Heart right ventricle (tissue), 16 donors: ENCODE measurements at regions of chr12 and their contacts with region 1.

Region 1: GRCh38 chr12:8956772-8957171 is 7.3 kb upstream of the M6PR start:
- DNase-seq: peak in 1 of 2 donors; percentile 14
- ATAC-seq: peak in 3 of 8 donors; percentile 34 to 72 (median 53)
- H3K4me3 ChIP-seq: no peak overlapping the region
- H3K27ac ChIP-seq: no peak overlapping the region
- H3K4me1 ChIP-seq: peaks cover 0 to 10% (median 0%) of the 10 kb centered on the region in 9 donors
- H3K27me3 ChIP-seq: no peaks in the 10 kb centered on the region
- CTCF ChIP-seq: no peak

Region 2: DNA sequence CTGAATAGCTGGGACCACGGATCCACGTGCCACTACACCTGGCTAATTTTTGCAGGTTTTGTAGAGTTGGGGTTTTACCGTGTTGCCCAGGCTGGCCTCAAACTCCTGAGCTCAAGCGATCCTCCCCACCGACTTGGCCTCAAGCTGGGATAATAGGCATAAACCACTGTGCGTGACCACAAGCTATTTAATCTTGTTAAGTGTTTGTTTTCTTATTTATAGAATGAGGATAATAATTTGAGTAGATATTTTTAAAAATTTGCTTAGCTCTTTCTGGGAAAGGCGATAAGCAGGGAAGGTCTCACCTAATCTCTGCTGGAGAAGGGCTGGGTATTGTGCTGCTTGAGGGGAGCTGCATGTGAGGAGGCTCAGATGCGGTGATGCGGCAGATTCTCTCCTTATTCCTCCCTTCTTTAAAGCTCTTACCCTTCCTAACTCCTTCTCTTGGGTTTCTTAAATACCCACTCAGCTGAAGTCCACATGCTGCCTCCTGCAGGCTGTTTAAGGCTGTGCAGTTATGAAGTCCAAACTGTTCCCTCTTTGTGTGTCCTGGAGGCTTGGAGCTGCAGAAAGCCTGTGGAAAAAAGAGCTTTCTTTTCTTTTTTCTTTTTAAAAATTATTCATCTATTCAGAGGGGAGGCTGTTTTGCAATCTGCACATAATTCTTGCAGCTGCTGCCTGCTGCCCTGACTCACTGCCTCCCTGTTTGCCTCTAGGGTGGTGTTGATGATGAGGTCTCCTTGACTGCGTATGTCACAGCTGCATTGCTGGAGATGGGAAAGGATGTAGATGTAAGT is 96.4 kb before region 1 on chr12:
- intact Hi-C with region 1: no loop called
- DNase-seq: peak; percentile 13 to 32
- ATAC-seq: peak in 6 of 8 donors; percentile 41 to 73 (median 70)
- H3K4me3 ChIP-seq: no peak overlapping the region
- H3K27ac ChIP-seq: no peak overlapping the region
- H3K4me1 ChIP-seq: no peaks in the 10 kb centered on the region
- H3K27me3 ChIP-seq: no peaks in the 10 kb centered on the region
- CTCF ChIP-seq: peak; percentile 32 to 75 (median 66)

Region 3: GRCh38 chr12:9032202-9033178 is 75.7 kb after region 1 on chr12:
- intact Hi-C with region 1: loop called in 4 of 10 experiments (anchors 5 kb)
- DNase-seq: no peak
- ATAC-seq: no peak
- H3K4me3 ChIP-seq: no peak overlapping the region
- H3K27ac ChIP-seq: no peak overlapping the region
- H3K4me1 ChIP-seq: no peaks in the 10 kb centered on the region
- H3K27me3 ChIP-seq: no peaks in the 10 kb centered on the region
- CTCF ChIP-seq: no peak